Activated CD4-positive, alpha-beta T cell treated with anti-CD3 and anti-CD28 coated beads for 36 hours (primary cell): ENCODE measurements at regions of chr2 and their contacts with region 1.

Region 1: GRCh38 chr2:190911813-190912212 is 31.2 kb downstream of the GLS start:
- DNase-seq: no peak
- ATAC-seq: peak; percentile 94
- H3K4me3 Mint-ChIP-seq: no peak overlapping the region
- H3K27ac Mint-ChIP-seq: peak overlapping the region; percentile 73
- H3K4me1 Mint-ChIP-seq: peaks cover 46% of the 10 kb centered on the region
- H3K27me3 Mint-ChIP-seq: no peaks in the 10 kb centered on the region

Region 2: GRCh38 chr2:189952536-189953109 is 959.2 kb before region 1 on chr2:
- CTCF ChIA-PET with region 1: no interaction called
- POLR2A ChIA-PET with region 1: no interaction called
- intact Hi-C with region 1: no loop called
- DNase-seq: no peak
- ATAC-seq: no peak
- H3K4me3 Mint-ChIP-seq: no peak overlapping the region
- H3K27ac Mint-ChIP-seq: no peak overlapping the region
- H3K4me1 Mint-ChIP-seq: no peaks in the 10 kb centered on the region
- H3K27me3 Mint-ChIP-seq: peaks cover 1% of the 10 kb centered on the region

Region 3: DNA sequence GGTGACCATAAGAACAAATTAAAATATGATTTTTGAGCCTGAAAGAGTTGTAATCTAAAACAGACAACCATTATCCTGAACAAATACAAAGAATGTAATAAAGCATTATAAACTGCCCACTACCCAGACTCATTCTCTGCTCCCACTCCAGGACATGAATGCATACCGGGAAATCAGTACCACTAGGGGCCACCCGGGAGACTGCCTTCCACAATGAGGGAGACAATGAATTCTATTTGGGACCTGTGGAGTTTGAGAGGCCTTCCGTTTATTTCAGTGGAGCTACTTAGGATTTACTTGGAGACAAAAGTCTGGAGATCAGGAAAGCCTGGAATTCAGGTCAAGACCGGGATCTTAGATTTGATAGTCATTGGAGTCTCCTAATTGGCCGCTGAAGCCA is 212.9 kb before region 1 on chr2:
- CTCF ChIA-PET with region 1: no interaction called
- POLR2A ChIA-PET with region 1: no interaction called
- intact Hi-C with region 1: no loop called
- DNase-seq: no peak
- ATAC-seq: no peak
- H3K4me3 Mint-ChIP-seq: no peak overlapping the region
- H3K27ac Mint-ChIP-seq: no peak overlapping the region
- H3K4me1 Mint-ChIP-seq: peaks cover 29% of the 10 kb centered on the region
- H3K27me3 Mint-ChIP-seq: no peaks in the 10 kb centered on the region

Region 4: DNA sequence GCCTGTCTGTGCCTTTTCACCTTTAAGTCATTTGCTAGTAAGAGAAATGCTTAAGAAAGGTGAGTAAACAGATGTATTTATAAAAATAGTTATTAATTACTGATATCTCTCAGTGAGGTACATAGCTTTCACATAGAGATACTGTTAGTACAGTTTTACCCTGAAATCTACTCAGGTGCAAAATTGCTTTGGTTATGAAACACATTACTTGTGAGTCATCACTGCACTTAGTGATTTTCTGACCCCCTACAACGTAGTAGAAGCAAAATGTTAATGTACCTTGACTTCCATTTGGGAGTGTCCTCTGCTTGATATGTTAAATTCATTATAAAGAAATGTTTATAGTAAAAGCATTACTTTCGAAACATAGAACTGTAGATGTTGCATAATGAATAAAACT is 24.7 kb before region 1 on chr2:
- CTCF ChIA-PET with region 1: interaction called, 3 read pairs
- POLR2A ChIA-PET with region 1: no interaction called
- intact Hi-C with region 1: loop called (anchors 1 kb)
- DNase-seq: no peak
- ATAC-seq: peak; percentile 67
- H3K4me3 Mint-ChIP-seq: no peak overlapping the region
- H3K27ac Mint-ChIP-seq: no peak overlapping the region
- H3K4me1 Mint-ChIP-seq: peaks cover 64% of the 10 kb centered on the region
- H3K27me3 Mint-ChIP-seq: no peaks in the 10 kb centered on the region

Region 5: GRCh38 chr2:191566344-191566743 is 654.5 kb after region 1 on chr2:
- CTCF ChIA-PET with region 1: no interaction called
- POLR2A ChIA-PET with region 1: no interaction called
- intact Hi-C with region 1: no loop called
- DNase-seq: peak; percentile 81
- ATAC-seq: peak; percentile 70
- H3K4me3 Mint-ChIP-seq: no peak overlapping the region
- H3K27ac Mint-ChIP-seq: no peak overlapping the region
- H3K4me1 Mint-ChIP-seq: peaks cover 16% of the 10 kb centered on the region
- H3K27me3 Mint-ChIP-seq: peaks cover 19% of the 10 kb centered on the region